ENCODE measurements at regions of chr7 and their contacts with region 1.

Region 1: GRCh38 chr7:91098566-91098965 is 165.7 kb upstream of the FZD1 start:
- DNase-seq: no peak
- ATAC-seq: no peak
- H3K4me3 ChIP-seq: no peak overlapping the region
- H3K4me3 Mint-ChIP-seq: no peak overlapping the region
- H3K27ac ChIP-seq: no peak overlapping the region
- H3K27ac Mint-ChIP-seq: no peak overlapping the region
- H3K4me1 ChIP-seq: no peaks in the 10 kb centered on the region
- H3K4me1 Mint-ChIP-seq: no peaks in the 10 kb centered on the region
- H3K27me3 ChIP-seq: no peaks in the 10 kb centered on the region
- H3K27me3 Mint-ChIP-seq: no peaks in the 10 kb centered on the region
- CTCF ChIP-seq: no peak

Region 2: GRCh38 chr7:91082852-91083495 is 15.6 kb before region 1 on chr7:
- CTCF ChIA-PET with region 1: interaction called, 3 read pairs
- POLR2A ChIA-PET with region 1: no interaction called
- intact Hi-C with region 1: loop called in 1 of 2 experiments (anchors 2 kb)
- DNase-seq: peak in 1 of 9 experiments; percentile 39
- ATAC-seq: peak; percentile 26
- H3K4me3 ChIP-seq: no peak overlapping the region
- H3K4me3 Mint-ChIP-seq: no peak overlapping the region
- H3K27ac ChIP-seq: no peak overlapping the region
- H3K27ac Mint-ChIP-seq: no peak overlapping the region
- H3K4me1 ChIP-seq: peaks cover 27% of the 10 kb centered on the region
- H3K4me1 Mint-ChIP-seq: peaks cover 32% of the 10 kb centered on the region
- H3K27me3 ChIP-seq: no peaks in the 10 kb centered on the region
- H3K27me3 Mint-ChIP-seq: no peaks in the 10 kb centered on the region
- CTCF ChIP-seq: peak; percentile 39

Region 3: DNA sequence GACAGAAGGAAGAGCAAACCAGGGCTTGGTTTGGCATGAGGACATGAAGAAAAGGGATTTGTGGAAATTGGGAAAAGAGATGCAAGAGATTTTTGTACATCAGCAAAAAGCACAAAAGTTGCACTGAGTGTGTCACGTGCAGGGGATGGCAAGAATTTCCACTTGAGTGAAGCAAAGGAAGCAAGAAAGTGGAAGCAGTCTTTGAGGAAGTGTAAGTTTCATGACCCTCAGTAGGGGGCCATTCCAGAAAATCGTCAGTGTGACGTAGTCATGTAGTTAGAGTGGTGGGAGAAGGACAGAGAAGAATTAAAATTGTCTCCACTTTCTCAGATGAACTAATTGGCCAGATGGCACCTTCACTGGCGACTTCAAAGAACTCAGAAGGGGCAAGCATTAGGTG is 42.4 kb after region 1 on chr7:
- CTCF ChIA-PET with region 1: no interaction called
- POLR2A ChIA-PET with region 1: no interaction called
- intact Hi-C with region 1: no loop called
- DNase-seq: peak in 1 of 9 experiments; percentile 5
- ATAC-seq: no peak
- H3K4me3 ChIP-seq: no peak overlapping the region
- H3K4me3 Mint-ChIP-seq: no peak overlapping the region
- H3K27ac ChIP-seq: no peak overlapping the region
- H3K27ac Mint-ChIP-seq: no peak overlapping the region
- H3K4me1 ChIP-seq: no peaks in the 10 kb centered on the region
- H3K4me1 Mint-ChIP-seq: no peaks in the 10 kb centered on the region
- H3K27me3 ChIP-seq: no peaks in the 10 kb centered on the region
- H3K27me3 Mint-ChIP-seq: no peaks in the 10 kb centered on the region
- CTCF ChIP-seq: no peak

Region 4: DNA sequence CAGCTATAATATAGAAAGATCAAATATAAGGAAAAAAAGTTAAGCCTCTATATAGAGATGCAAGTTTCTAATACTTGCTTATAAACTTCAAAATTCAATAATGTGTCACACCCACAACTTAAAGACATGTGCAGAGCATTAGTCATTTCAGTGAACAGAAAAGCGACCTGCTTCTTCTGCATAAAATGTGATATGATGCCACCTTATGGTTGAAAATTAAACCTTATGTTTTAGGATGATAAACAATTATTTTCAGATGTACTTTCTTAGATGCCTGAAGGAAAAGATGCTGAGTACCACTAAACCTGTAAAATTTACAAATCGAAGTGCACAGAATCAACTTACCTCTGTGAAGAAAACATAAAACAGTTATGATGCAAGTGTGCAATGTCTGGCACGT is 685.9 kb after region 1 on chr7:
- CTCF ChIA-PET with region 1: no interaction called
- POLR2A ChIA-PET with region 1: no interaction called
- intact Hi-C with region 1: loop called in 1 of 2 experiments (anchors 10 kb)
- DNase-seq: no peak
- ATAC-seq: no peak
- H3K4me3 ChIP-seq: no peak overlapping the region
- H3K4me3 Mint-ChIP-seq: no peak overlapping the region
- H3K27ac ChIP-seq: no peak overlapping the region
- H3K27ac Mint-ChIP-seq: no peak overlapping the region
- H3K4me1 ChIP-seq: no peaks in the 10 kb centered on the region
- H3K4me1 Mint-ChIP-seq: no peaks in the 10 kb centered on the region
- H3K27me3 ChIP-seq: no peaks in the 10 kb centered on the region
- H3K27me3 Mint-ChIP-seq: no peaks in the 10 kb centered on the region
- CTCF ChIP-seq: no peak